ENCODE measurements at regions of chr22 and their contacts with region 1.

Region 1: GRCh38 chr22:44057401-44057987 is 33.4 kb downstream of the PARVB start:
- DNase-seq: no peak
- H3K4me3 ChIP-seq: no peak overlapping the region
- H3K27ac ChIP-seq: no peak overlapping the region
- H3K4me1 ChIP-seq: peaks cover 11% of the 10 kb centered on the region
- H3K27me3 ChIP-seq: no peaks in the 10 kb centered on the region
- CTCF ChIP-seq: no peak
- POLR2A ChIP-seq: no peak

Region 2: DNA sequence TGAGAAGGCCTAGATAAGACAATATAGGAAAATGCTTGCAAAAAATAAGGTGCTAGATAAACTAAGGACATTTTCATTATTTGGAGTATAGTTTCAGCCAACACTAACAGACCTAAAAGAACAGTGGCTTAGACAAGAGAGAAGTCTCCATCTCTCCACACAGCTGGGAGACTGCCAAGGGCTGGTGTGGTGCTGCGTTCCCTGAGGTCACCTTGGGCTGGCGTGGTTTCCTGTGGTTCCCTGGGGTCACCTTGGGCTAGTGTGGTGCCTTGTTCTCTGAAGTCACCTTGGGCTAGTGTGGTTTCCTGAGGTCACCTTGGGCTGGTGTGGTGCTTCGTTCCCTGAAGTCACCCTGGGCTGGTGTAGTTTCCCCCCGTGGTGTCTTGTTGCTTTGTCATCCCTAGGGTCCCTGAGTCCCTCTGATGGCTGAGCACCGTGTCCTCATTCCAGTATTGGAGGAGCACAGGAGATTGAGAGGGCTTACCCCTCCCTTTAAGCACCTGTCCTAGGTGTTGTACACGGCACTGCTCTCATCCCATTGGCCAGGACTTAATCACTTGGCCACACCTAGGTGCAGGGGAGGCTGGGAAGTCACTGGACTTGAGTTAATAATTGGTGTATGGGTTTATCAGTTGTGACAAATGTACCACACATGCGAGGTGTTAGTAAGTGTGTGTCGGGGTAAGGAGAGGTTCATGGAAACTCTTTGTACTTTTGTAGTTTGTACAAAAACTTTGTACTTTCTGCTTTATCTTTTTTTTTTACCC is 87.3 kb before region 1 on chr22:
- CTCF ChIA-PET with region 1: no interaction called
- POLR2A ChIA-PET with region 1: interaction called, 11 read pairs
- dilution Hi-C with region 1: no loop called
- intact Hi-C with region 1: no loop called
- DNase-seq: no peak
- H3K4me3 ChIP-seq: no peak overlapping the region
- H3K27ac ChIP-seq: no peak overlapping the region
- H3K4me1 ChIP-seq: no peaks in the 10 kb centered on the region
- H3K27me3 ChIP-seq: no peaks in the 10 kb centered on the region
- CTCF ChIP-seq: no peak
- POLR2A ChIP-seq: no peak

Region 3: DNA sequence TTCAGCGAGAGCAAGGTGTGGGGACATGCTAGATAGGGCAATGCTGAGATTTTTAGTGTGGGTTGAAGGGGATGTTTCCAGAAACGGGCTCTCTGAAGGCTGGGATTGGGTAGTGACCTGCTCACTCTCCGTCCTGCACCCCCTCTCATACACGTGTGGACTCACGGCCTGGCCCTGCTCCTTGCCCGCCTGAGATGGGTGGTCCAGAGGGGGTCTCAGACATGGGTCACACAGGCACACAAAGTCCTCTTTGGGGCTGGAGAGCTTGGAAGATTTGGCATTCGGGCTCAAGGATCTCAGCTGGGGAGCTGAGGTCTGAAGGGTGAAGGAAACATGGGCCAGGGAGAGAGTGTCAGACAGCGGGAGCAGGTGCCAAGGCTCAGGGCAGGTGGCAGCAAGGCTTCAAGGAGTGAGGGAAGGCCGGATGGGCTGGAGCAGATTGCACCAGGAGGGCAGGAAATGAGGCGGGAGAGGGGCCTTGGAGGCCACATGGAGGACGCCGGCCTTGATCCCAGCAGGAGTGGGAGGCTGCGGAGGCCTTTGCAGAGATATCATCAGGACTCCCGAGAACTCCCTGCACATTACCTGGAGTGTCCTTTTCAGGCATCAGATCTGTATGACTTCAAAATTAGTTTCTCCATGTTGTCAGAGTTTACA is 40.7 kb after region 1 on chr22:
- CTCF ChIA-PET with region 1: no interaction called
- POLR2A ChIA-PET with region 1: no interaction called
- dilution Hi-C with region 1: no loop called
- intact Hi-C with region 1: no loop called
- DNase-seq: no peak
- H3K4me3 ChIP-seq: no peak overlapping the region
- H3K27ac ChIP-seq: no peak overlapping the region
- H3K4me1 ChIP-seq: no peaks in the 10 kb centered on the region
- H3K27me3 ChIP-seq: no peaks in the 10 kb centered on the region
- CTCF ChIP-seq: no peak
- POLR2A ChIP-seq: no peak